Lower leg skin (tissue), 4 donors: ENCODE measurements at regions of chr1 and their contacts with region 1.

Region 1: DNA sequence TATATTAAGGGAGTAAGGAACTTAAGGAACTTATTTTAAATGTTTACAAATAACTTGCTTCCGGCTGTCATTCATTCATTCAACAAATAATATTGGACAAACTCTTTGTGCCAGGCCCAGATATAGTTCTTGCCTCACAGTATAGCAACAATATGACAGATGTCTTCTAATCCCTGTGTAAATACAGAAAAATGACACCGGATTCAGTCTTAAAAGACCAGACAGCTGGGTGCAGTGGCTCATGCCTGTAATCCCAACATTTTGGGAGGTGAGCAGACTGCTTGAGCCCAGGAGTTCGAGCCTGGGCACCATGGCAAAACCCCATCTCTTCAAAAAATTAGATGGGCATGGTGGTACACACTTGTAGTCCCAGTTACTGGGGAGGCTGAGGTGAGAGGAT is 23.7 kb downstream of the EIF2B3 start:
- DNase-seq: no peak
- H3K4me3 ChIP-seq: no peak overlapping the region
- CTCF ChIP-seq: no peak
- POLR2A ChIP-seq: no peak

Region 2: GRCh38 chr1:44973645-44974044 is 10.9 kb after region 1 on chr1:
- intact Hi-C with region 1: loop called (anchors 2 kb)
- DNase-seq: no peak
- H3K4me3 ChIP-seq: no peak overlapping the region
- CTCF ChIP-seq: no peak
- POLR2A ChIP-seq: no peak